SK-N-SH (cell line): ENCODE measurements at regions of chr17 and their contacts with region 1.

Region 1: DNA sequence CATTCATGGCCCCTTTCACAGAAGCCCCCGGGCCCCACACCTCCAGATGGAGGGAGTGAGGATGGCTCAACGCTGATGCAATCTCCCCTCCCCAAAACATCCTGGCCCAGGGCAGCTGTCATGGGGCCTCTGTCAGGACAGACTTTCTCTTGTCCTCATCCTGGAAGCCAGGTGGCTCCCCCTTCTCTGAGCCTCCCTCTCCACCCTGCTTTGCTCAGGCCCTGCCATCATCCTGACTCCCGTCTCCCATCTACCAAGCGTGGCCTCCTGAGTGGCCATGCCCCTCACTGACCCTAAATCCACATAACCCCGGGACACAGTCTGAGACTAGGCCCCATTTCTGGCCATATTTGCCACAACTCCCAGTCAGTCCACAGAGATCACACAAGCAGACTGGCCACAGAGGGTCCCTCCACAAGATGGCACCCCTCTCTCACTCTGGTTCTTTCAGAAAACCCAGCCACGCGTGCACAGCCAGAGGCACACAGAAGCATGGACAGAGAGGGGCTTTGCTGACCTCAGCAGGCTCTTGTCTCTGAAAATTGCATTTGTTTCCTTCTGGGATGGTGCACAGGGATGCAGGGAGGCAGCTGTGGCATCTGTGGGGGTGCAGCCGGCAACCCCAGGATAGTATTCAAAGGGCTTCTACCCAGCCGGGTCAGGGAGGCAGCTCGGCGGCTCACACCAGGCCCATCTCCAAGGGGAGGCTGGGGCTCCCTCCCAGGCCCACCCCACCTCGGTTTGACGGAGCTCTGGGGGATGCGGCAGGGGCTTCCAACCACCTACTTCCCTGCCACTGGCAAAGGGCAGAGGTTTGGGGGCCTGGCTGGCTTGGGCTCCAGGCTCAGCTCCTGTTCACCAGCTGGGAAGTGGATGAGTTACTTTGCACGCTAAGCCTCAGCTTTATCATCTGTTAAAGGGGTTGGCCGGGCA is 16.9 kb downstream of the DOC2B start:
- DNase-seq: peak; percentile 88
- H3K4me3 ChIP-seq: no peak overlapping the region; a peak in 1 of 4 replicates
- H3K27ac ChIP-seq: no peak overlapping the region; a peak in 1 of 4 replicates
- H3K4me1 ChIP-seq: no peaks in the 10 kb centered on the region
- H3K27me3 ChIP-seq: no peaks in the 10 kb centered on the region; the same call in 1 of the 2 replicates
- CTCF ChIP-seq: peak; percentile 54
- EP300 ChIP-seq: no peak
- RAD21 ChIP-seq: peak; percentile 84

Region 2: DNA sequence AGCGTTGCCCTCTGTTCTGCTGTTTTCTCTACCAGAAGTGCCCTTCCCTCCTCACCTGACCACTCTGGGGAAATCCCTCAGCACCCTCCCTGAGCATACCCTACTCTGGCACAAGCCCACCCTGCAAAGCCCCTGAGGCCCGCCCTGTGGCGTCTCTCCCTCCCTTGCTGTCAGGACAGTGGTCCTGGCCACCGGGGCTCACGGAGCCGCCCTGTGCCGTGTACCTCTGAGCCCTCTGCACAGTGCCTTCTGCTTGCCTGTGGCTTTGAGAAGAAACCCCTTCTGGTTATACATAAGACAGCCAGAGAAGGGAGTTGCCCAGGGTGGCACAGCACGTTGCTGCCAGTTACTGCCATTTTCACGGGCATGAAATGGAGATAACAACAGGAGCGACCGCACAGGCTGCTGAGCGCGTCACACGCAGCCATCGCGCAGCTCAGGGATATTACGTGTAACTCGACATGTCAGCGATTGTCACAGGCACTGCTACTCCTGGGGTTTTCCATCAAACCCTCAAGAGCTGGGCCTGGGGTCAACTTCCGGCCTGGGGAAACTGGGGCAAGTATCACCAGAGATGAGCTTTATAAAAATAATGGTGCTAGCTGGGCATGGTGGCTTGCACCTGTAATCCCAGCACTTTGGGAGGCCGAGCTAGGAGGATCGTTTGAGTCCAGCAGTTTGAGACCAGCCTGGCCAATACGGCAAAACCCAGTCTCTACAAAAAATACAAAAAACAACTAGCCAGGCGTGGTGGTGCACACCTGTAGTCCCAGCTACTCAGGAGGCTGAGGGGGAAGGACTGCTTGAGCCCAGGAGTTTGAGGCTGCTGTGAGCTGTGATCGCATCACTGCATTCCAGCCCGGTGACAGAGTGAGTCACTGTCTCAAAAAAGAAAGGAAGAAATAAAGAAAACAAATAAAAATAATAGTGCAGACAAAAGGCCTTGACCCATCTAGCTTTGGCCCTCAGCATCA is 12.4 kb before region 1 on chr17:
- CTCF ChIA-PET with region 1: interaction called, 12 read pairs
- POLR2A ChIA-PET with region 1: no interaction called
- DNase-seq: no peak
- H3K4me3 ChIP-seq: no peak overlapping the region
- H3K27ac ChIP-seq: no peak overlapping the region
- H3K4me1 ChIP-seq: no peaks in the 10 kb centered on the region
- H3K27me3 ChIP-seq: no peaks in the 10 kb centered on the region
- CTCF ChIP-seq: no peak
- EP300 ChIP-seq: no peak
- RAD21 ChIP-seq: no peak

Region 3: GRCh38 chr17:385926-386876 is 221.6 kb after region 1 on chr17:
- CTCF ChIA-PET with region 1: interaction called, 33 read pairs
- POLR2A ChIA-PET with region 1: no interaction called
- DNase-seq: peak; percentile 97
- H3K4me3 ChIP-seq: peak overlapping the region in 1 of 2 experiments; percentile 50; a peak in 2 of 4 replicates
- H3K27ac ChIP-seq: no peak overlapping the region
- H3K4me1 ChIP-seq: peaks cover 5 to 22% of the 10 kb centered on the region in 2 experiments; a peak in 2 of 4 replicates
- H3K27me3 ChIP-seq: no peaks in the 10 kb centered on the region
- CTCF ChIP-seq: peak; percentile 40
- EP300 ChIP-seq: no peak
- RAD21 ChIP-seq: peak; percentile 66